PC-3 (cell line): ENCODE measurements at regions of chr12 and their contacts with region 1.

Region 1: DNA sequence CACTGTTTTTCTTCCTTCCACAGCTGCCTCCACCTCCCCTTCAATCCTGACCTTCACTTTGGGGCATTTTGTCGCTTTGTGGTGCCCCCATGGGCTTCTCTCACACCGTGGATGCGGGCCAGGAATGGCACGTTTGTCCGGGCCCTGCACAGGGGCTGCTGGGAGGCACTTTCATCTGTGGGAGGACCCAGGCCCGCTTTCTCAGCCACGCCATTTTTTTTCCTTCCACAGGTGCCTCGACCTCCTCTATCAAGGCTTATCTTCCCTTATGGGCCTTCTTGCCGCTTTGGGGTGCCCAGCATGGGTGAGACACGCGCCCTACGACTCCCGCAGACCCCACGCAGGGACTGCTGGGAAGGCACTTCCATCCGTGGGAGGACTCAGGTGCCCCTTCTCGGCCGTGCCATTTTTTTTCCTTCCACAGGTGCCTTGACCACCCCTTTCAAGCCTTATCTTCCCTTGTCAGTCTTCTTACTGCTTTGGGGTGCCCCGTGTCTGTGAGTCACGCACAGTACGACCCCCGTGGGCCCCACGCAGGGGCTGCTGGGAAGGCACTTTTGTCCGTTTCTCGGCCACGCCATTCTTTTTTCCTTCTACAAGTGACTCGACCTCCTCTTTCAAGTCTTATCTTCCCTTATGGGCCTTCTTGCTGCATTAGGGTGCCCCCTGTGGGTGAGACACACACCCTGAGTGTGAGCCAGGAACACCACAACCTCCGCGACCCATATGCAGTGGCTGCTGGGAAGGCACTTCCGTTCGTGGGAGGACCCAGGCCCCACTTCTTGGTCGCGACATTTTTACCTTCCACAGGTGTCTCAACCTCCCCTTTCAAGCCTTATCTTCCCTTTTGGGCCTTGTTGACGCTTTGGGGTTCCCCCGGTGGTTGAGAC is 270.7 kb downstream of the ALG10 start:
- DNase-seq: peak; percentile 32
- ATAC-seq: peak; percentile 55; the same call in 1 of the 2 replicates
- H3K4me3 ChIP-seq: no peak overlapping the region
- H3K27ac ChIP-seq: no peak overlapping the region
- H3K4me1 ChIP-seq: no peaks in the 10 kb centered on the region
- H3K27me3 ChIP-seq: no peaks in the 10 kb centered on the region
- CTCF ChIP-seq: peak; percentile 46

Region 2: DNA sequence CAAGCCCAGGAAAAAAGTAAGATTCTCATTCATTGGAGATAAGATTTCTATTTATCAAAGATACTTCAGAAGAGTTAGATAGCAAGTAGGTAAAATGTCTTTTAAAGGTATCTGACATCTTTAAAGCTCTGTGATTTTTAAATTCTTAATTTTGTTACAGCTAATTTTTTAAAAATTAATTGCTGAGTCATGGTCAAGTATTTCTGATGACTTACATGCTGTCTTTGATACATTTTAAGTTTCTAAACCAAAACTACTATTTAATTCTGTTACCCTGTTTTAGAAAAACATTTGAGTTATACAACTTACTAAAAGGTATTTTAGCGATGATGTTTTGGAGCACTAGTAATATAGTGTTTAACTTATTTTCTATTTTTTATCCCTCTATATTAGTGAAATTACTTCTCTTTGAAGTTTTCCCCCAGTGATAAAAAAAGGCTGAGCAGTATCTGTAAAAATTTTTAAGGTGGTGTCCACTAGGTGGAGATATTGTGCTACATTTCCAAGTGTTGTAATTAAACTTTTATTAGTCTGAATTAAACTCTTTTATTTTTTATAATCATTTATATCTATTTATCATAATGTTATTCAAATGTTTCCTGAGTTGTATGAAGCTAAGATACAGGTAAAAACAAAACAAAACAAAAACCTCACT is 259.2 kb before region 1 on chr12:
- CTCF ChIA-PET with region 1: no interaction called
- POLR2A ChIA-PET with region 1: no interaction called
- intact Hi-C with region 1: loop called (anchors 2 kb)
- DNase-seq: peak; percentile 59
- ATAC-seq: no peak
- H3K4me3 ChIP-seq: no peak overlapping the region
- H3K27ac ChIP-seq: no peak overlapping the region
- H3K4me1 ChIP-seq: no peaks in the 10 kb centered on the region
- H3K27me3 ChIP-seq: no peaks in the 10 kb centered on the region
- CTCF ChIP-seq: peak; percentile 56

Region 3: DNA sequence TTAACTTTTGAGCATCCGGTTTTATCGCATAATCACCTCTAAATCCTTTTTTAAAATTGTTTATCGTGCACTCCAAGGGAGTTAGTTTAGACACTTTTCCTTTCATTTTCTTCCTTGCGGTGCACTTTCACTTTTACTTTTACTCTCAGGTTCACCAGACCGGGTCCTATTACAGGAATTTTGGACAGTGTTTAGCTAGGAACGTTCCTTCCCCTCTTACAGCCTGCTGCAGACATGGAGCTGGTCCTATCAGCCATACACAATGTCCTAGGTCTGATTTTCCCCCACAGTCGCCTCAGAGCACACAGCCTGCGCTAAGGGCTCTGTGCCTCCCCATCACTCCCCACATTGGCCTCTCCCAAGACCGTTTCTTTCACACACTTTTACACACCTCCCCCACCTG is 166.7 kb before region 1 on chr12:
- CTCF ChIA-PET with region 1: no interaction called
- POLR2A ChIA-PET with region 1: no interaction called
- intact Hi-C with region 1: loop called (anchors 1 kb)
- DNase-seq: peak; percentile 16
- ATAC-seq: peak; percentile 64
- H3K4me3 ChIP-seq: peak overlapping the region; percentile 51
- H3K27ac ChIP-seq: no peak overlapping the region
- H3K4me1 ChIP-seq: no peaks in the 10 kb centered on the region; the same call in 1 of the 2 replicates
- H3K27me3 ChIP-seq: no peaks in the 10 kb centered on the region
- CTCF ChIP-seq: no peak

Region 4: GRCh38 chr12:34218165-34219045 is 74.6 kb before region 1 on chr12:
- CTCF ChIA-PET with region 1: no interaction called
- POLR2A ChIA-PET with region 1: no interaction called
- intact Hi-C with region 1: loop called (anchors 5 kb)
- DNase-seq: peak; percentile 89
- ATAC-seq: peak; percentile 89
- H3K4me3 ChIP-seq: peak overlapping the region; percentile 87
- H3K27ac ChIP-seq: no peak overlapping the region
- H3K4me1 ChIP-seq: no peaks in the 10 kb centered on the region; the same call in 1 of the 2 replicates
- H3K27me3 ChIP-seq: no peaks in the 10 kb centered on the region
- CTCF ChIP-seq: peak; percentile 92

Region 5: DNA sequence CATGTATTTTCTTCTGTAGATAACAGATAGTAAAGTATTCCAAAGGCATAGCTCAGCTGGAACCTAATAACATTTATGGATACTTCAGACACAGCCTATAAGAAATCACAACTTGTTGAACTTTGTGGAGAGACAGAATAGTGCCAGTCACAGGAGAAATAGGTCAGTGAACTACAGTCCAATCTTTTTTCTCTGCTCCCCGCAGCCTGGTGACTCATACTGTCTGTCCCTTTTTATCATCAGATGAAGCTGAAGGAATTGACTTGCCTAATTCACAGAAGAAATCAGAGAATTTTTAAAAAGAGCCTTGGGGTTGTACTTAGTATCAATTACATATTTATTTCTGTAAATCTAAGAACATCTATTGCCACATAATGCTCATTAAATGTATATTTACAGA is 48.4 kb before region 1 on chr12:
- CTCF ChIA-PET with region 1: no interaction called
- POLR2A ChIA-PET with region 1: no interaction called
- intact Hi-C with region 1: loop called (anchors 10 kb)
- DNase-seq: peak; percentile 40
- ATAC-seq: peak; percentile 65
- H3K4me3 ChIP-seq: no peak overlapping the region
- H3K27ac ChIP-seq: no peak overlapping the region
- H3K4me1 ChIP-seq: peaks cover 5% of the 10 kb centered on the region; the same call in 1 of the 2 replicates
- H3K27me3 ChIP-seq: no peaks in the 10 kb centered on the region
- CTCF ChIP-seq: no peak

Region 6: DNA sequence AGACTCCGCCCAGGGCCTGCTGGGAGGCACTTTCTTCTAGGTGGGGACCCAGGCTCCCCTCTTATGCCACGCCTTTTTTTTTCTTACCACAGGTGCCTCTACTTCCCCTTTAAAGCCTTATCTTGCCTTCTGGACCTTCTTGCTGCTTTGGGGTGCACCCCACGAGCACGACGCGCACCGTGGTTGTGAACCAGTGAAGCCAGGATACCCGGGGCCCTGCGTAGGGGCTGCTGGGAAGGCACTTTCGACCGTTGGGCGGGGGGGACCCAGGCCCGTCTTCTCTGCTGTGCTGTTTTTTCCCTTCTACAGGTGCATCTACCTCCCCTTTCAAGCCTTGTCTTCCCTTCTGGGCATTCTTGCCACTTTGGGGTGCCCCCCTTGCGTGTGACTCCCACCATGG is 34.7 kb after region 1 on chr12:
- CTCF ChIA-PET with region 1: no interaction called
- POLR2A ChIA-PET with region 1: no interaction called
- intact Hi-C with region 1: no loop called
- DNase-seq: no peak
- ATAC-seq: no peak
- H3K4me3 ChIP-seq: no peak overlapping the region
- H3K27ac ChIP-seq: no peak overlapping the region
- H3K4me1 ChIP-seq: no peaks in the 10 kb centered on the region
- H3K27me3 ChIP-seq: no peaks in the 10 kb centered on the region
- CTCF ChIP-seq: no peak

Region 7: DNA sequence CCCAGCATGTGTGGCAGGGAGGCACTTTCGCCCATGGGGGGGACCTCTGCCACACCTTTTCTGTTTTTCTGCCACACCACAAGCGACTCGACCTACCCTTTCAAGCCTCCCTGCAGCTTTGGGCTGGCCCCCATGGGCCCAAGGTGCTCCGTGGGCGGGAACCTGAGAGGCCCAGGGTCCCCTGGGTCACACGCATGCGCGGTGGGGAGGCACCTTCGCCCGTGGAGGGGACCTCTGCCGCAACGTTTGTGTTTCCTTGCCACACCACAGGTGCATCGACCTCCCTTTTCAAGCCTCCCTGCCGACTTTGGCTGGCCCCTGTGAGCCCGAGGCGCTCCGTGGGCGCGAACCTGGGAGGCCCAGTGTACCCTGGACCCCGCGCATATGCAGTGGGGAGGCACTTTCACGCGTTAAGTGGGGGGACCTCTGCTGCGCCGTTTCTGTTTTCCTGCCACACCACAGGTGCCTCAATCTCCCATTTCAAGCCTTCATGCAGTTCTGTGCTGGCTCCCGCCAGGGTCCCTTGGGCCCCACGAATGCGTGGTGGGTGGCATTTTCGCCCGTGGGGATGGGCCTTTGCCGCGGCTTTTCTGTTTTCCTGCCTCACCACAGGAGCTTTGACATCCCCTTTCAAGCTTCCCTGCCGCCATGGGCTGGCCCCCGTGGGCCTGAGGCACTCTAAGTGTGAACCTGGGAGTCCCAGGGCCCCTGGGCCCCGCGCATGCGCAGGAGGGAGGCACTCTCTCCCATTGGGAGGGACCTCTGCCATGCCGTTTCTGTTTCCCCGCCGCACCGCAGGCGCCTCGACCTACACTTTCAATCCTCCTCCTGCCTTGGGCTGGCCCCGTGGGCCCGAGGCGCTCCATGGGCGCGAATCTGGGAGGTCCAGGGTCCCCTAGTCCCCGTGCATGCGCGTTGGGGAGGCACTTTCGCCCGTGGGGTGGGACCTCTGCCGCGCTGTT is 61.5 kb after region 1 on chr12:
- CTCF ChIA-PET with region 1: no interaction called
- POLR2A ChIA-PET with region 1: no interaction called
- intact Hi-C with region 1: no loop called
- DNase-seq: no peak
- ATAC-seq: no peak
- H3K4me3 ChIP-seq: no peak overlapping the region; the same call in 1 of the 2 replicates
- H3K27ac ChIP-seq: no peak overlapping the region
- H3K4me1 ChIP-seq: 0 out of 2 replicates have a peak, but pooled peaks cover 8% of the 10 kb centered on the region
- H3K27me3 ChIP-seq: peaks cover 29% of the 10 kb centered on the region
- CTCF ChIP-seq: no peak

Region 8: DNA sequence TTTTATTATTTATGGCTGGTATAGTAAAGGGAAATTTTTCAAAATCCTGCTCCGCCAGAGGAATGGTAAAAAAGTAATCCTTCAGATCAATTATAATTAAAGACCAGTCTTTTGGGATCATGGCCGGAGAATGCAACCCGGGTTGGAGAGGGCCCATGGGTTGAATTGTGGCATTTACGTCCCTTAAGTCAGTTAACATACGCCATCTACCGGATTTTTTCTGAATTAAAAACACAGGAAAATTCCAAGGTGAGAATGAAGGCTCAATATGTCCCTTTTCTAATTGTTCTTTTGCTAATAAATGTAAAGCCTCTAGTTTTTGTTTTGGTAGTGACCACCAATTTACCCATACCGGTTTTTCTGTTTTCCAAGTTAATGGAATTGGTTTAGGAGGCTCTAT is 332.1 kb after region 1 on chr12:
- CTCF ChIA-PET with region 1: no interaction called
- POLR2A ChIA-PET with region 1: no interaction called
- intact Hi-C with region 1: loop called (anchors 10 kb)
- DNase-seq: peak; percentile 78
- ATAC-seq: peak; percentile 43; the same call in 1 of the 2 replicates
- H3K4me3 ChIP-seq: no peak overlapping the region
- H3K27ac ChIP-seq: no peak overlapping the region
- H3K4me1 ChIP-seq: no peaks in the 10 kb centered on the region
- H3K27me3 ChIP-seq: no peaks in the 10 kb centered on the region
- CTCF ChIP-seq: peak; percentile 77